Aorta (tissue), 5 donors: ENCODE measurements at regions of chr10 and their contacts with region 1.

Region 1: DNA sequence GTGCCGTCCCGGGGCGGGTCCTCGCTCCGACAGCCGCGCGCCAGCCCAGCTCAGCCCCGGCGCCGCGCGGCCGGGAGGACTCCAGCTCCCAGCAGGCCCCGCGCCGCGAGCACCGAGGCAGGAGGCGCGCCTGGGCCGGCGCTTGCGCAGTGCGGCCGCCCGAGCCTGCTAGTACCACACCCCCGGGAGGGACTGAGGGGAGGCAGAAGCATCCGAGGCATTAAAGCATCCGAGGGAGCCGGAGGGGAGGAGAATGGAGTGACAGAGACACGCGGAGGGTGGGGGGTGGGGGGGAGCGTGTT is at the start of gene GRK5:
- DNase-seq: peak; percentile 97
- ATAC-seq: peak; percentile 95
- H3K4me3 ChIP-seq: peak within 1 kb of the TSS; percentile 89 to 95
- H3K27ac ChIP-seq: peak within 1 kb of the TSS; percentile 80 to 91
- H3K4me1 ChIP-seq: peaks cover 0 to 6% of the 10 kb centered on the region in 2 donors
- H3K27me3 ChIP-seq: no peaks in the 10 kb centered on the region
- total RNA-seq, gene GRK5: 73.8 to 112 TPM

Region 2: DNA sequence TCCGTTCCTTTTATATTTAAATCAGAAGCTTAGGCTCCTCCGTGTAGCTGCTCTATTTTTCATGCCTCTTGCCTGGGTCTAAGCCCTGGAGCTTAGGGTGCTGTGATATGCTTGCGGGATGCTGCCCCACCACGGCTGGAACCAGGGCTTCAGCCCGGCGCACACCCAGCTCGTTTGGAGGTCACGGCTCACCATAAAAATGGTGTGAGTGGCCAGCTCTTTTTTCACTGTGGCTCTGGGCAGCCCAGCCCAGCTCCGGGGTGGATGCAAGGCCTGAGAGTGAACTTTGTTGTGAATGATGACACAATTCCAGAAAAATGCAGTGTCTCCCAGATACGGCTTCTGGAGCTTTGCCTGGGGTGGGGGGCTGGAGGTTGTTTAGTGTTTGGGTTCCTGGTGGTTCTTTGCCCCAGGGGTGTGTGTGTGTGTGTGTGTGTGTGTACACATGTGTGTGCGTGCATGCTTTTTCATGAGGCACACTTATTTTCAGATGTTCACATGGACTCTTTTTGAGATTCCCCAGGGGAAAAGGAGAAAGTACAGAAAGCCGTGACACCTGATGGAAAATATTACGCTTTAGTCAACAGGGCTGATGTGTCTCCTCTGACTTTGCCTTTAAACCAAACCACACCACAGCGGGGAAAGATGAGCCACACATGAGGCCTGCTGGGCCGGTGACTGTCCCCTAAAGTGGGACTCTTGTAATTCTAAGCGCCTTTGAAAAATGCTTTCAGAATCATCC is 46.3 kb after region 1 on chr10:
- intact Hi-C with region 1: loop called (anchors 5 kb)
- DNase-seq: peak; percentile 85 to 89
- ATAC-seq: peak; percentile 86
- H3K4me3 ChIP-seq: no peak overlapping the region
- H3K27ac ChIP-seq: peak overlapping the region; percentile 57 to 94
- H3K4me1 ChIP-seq: peaks cover 3% of the 10 kb centered on the region in 2 donors
- H3K27me3 ChIP-seq: no peaks in the 10 kb centered on the region

Region 3: GRCh38 chr10:119416855-119417254 is 209.5 kb after region 1 on chr10:
- intact Hi-C with region 1: loop called (anchors 1 to 5 kb)
- DNase-seq: peak; percentile 78 to 86
- ATAC-seq: no peak
- H3K4me3 ChIP-seq: no peak overlapping the region
- H3K27ac ChIP-seq: no peak overlapping the region
- H3K4me1 ChIP-seq: peaks cover 0 to 2% of the 10 kb centered on the region in 2 donors
- H3K27me3 ChIP-seq: no peaks in the 10 kb centered on the region

Region 4: GRCh38 chr10:119445311-119445934 is 238.1 kb after region 1 on chr10:
- intact Hi-C with region 1: loop called in 1 of 2 experiments (anchors 1 kb)
- DNase-seq: peak; percentile 90 to 94
- ATAC-seq: peak; percentile 68
- H3K4me3 ChIP-seq: no peak overlapping the region
- H3K27ac ChIP-seq: no peak overlapping the region
- H3K4me1 ChIP-seq: peaks cover 0 to 4% of the 10 kb centered on the region in 2 donors
- H3K27me3 ChIP-seq: no peaks in the 10 kb centered on the region